Activated CD4-positive, alpha-beta T cell treated with anti-CD3 and anti-CD28 coated beads for 36 hours (primary cell): ENCODE measurements at regions of chr3 and their contacts with region 1.

Region 1: GRCh38 chr3:158434412-158435038 is 136.5 kb upstream of the MLF1 start:
- DNase-seq: peak; percentile 55
- ATAC-seq: no peak
- H3K4me3 Mint-ChIP-seq: no peak overlapping the region
- H3K27ac Mint-ChIP-seq: no peak overlapping the region
- H3K4me1 Mint-ChIP-seq: no peaks in the 10 kb centered on the region
- H3K27me3 Mint-ChIP-seq: no peaks in the 10 kb centered on the region

Region 2: DNA sequence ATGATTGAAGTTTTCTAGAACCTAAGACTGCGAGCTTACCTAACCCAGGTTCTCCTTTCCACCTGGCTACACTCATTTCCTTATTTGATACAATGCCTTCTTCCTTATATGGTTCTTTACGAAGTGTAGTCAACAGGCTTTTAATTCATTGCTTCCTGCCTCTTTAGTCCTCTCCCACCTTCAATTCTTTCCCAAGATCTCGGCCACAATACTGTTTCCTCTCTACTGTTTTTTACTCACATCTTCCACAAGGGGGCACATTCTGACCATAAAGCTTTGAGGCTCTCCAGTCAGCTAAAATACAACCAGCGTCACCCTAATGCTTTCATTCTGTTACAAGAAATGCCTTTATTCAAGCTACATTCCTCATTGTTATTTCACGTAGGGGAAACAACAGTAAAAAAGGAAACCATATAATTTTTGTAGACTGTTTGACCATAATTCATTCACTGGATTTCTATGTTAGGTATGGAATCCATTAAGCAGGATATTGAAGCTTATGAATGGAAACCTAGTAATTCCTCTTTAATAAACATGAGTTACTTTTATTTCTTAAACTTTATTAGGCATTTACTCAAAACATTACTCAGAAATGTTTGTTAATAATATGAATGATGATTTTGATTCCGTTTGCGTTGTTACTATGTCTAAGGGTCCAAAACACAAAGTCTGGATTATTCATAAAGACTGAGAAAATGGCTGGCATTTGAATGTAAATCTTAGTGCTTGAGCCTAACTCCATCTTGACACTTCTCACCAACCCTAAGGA is 901.8 kb before region 1 on chr3:
- CTCF ChIA-PET with region 1: interaction called, 5 read pairs
- POLR2A ChIA-PET with region 1: no interaction called
- intact Hi-C with region 1: loop called in 1 of 2 experiments (anchors 5 kb)
- DNase-seq: peak; percentile 16
- ATAC-seq: peak; percentile 61
- H3K4me3 Mint-ChIP-seq: no peak overlapping the region
- H3K27ac Mint-ChIP-seq: no peak overlapping the region
- H3K4me1 Mint-ChIP-seq: no peaks in the 10 kb centered on the region
- H3K27me3 Mint-ChIP-seq: no peaks in the 10 kb centered on the region

Region 3: GRCh38 chr3:157618075-157618760 is 816.3 kb before region 1 on chr3:
- CTCF ChIA-PET with region 1: no interaction called
- POLR2A ChIA-PET with region 1: no interaction called
- intact Hi-C with region 1: loop called (anchors 1 to 5 kb)
- DNase-seq: peak; percentile 49
- ATAC-seq: peak; percentile 95
- H3K4me3 Mint-ChIP-seq: no peak overlapping the region
- H3K27ac Mint-ChIP-seq: no peak overlapping the region
- H3K4me1 Mint-ChIP-seq: peaks cover 9% of the 10 kb centered on the region
- H3K27me3 Mint-ChIP-seq: peaks cover 8% of the 10 kb centered on the region

Region 4: GRCh38 chr3:157865352-157866000 is 569.0 kb before region 1 on chr3:
- CTCF ChIA-PET with region 1: interaction called, 6 read pairs
- POLR2A ChIA-PET with region 1: no interaction called
- intact Hi-C with region 1: loop called (anchors 1 to 5 kb)
- DNase-seq: peak; percentile 73
- ATAC-seq: peak; percentile 65
- H3K4me3 Mint-ChIP-seq: no peak overlapping the region
- H3K27ac Mint-ChIP-seq: no peak overlapping the region
- H3K4me1 Mint-ChIP-seq: no peaks in the 10 kb centered on the region
- H3K27me3 Mint-ChIP-seq: no peaks in the 10 kb centered on the region

Region 5: GRCh38 chr3:158097593-158098308 is 336.8 kb before region 1 on chr3:
- CTCF ChIA-PET with region 1: interaction called, 7 read pairs
- POLR2A ChIA-PET with region 1: no interaction called
- intact Hi-C with region 1: loop called (anchors 5 kb)
- DNase-seq: peak; percentile 86
- ATAC-seq: peak; percentile 96
- H3K4me3 Mint-ChIP-seq: peak overlapping the region; percentile 84
- H3K27ac Mint-ChIP-seq: peak overlapping the region; percentile 45
- H3K4me1 Mint-ChIP-seq: peaks cover 23% of the 10 kb centered on the region
- H3K27me3 Mint-ChIP-seq: peaks cover 75% of the 10 kb centered on the region

Region 6: GRCh38 chr3:158244274-158244673 is 190.3 kb before region 1 on chr3:
- CTCF ChIA-PET with region 1: no interaction called
- POLR2A ChIA-PET with region 1: no interaction called
- intact Hi-C with region 1: no loop called
- DNase-seq: no peak
- ATAC-seq: no peak
- H3K4me3 Mint-ChIP-seq: no peak overlapping the region
- H3K27ac Mint-ChIP-seq: no peak overlapping the region
- H3K4me1 Mint-ChIP-seq: no peaks in the 10 kb centered on the region
- H3K27me3 Mint-ChIP-seq: no peaks in the 10 kb centered on the region